ENCODE measurements at regions of chr15 and their contacts with region 1.

Region 1: GRCh38 chr15:88620995-88621772 is at the start of gene AEN:
- DNase-seq: peak; percentile 91 to 99 (median 96)
- H3K4me3 ChIP-seq: peak within 1 kb of the TSS; percentile 59 to 99 (median 91)
- H3K27ac ChIP-seq: peak within 1 kb of the TSS in 36 of 59 donors; percentile 3 to 88 (median 54)
- H3K27me3 ChIP-seq: no peaks in the 10 kb centered on the region
- CTCF ChIP-seq: peak in 55 of 56 donors; percentile 22 to 87 (median 62)
- total RNA-seq, gene AEN: 3.9 to 18.5 (median 9.6) TPM

Region 2: DNA sequence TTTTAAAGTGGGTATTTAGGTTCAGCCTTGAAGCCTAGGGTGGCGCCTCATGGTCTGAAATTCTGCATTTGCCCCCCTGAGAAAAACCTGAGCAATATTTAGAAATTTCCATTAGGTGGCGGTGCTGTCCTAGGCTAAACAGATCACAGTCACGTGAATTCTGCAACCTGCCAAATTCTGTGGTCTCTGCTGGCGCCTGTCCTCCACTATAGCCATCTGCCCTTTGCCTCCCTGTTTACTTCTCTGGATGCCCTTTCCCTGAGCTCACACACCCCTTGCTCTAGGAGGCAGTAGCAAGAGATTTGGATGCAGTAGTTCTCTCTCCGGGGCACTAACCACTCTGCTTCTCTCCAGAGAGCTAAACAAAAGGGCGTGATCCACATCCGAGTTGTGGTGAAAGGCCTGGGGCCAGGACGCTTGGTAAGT is 144.5 kb before region 1 on chr15:
- intact Hi-C with region 1: loop called in 1 of 2 experiments (anchors 5 kb)
- DNase-seq: peak in 4 of 10 donors; percentile 43 to 72 (median 50)
- H3K4me3 ChIP-seq: peak overlapping the region in 9 of 59 donors; percentile 1 to 23 (median 9)
- H3K27ac ChIP-seq: peak overlapping the region in 55 of 59 donors; percentile 35 to 87 (median 72)
- H3K27me3 ChIP-seq: no peaks in the 10 kb centered on the region
- CTCF ChIP-seq: peak; percentile 55 to 87 (median 74)

Region 3: DNA sequence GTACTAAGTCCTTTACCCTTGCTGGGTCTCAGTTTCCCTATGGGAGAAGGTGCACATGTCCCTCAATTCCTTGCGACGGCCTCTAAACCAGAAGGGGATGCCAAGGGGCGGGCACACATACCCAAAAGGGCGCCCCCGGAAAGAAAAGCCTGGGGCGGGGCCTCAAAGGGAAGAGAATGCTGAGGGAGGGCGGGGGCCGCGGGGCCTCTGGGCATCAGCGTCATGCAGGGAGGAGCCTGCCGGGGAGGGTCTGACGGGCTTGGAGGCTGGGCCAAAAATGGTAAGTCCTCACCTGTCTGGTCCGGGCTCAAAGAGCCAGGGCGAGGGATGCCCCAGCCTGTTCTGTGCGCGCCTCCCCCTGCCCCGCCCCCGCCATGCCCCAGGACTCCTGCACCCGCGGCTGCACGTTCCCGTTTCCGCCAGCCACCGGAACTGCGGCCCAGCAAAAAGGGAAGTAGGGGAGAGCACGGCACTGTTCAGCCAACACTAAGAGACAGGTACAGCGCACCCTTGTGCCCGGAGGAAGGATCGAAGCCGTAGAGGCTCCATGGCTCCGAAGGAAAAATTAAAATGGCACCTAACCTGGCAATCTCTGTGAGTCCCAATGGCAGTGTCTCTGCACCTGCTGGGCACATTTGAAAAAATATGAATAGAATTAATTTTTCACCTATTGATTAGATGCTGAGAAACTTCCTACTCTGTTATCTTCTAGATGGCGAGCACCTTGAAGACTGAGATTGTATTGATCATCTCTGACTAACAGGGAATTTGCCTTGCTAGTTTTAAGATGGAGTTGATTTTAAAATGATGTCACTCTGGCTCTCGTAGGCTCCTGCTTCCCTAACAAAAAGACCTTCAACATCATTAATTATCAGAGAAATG is 74.7 kb before region 1 on chr15 and contains the start of gene DET1:
- intact Hi-C with region 1: loop called in 1 of 2 experiments (anchors 5 kb)
- DNase-seq: peak; percentile 93 to 97 (median 96)
- H3K4me3 ChIP-seq: peak within 1 kb of the TSS; percentile 43 to 97 (median 82)
- H3K27ac ChIP-seq: peak within 1 kb of the TSS; percentile 63 to 98 (median 91)
- H3K27me3 ChIP-seq: no peaks in the 10 kb centered on the region
- CTCF ChIP-seq: peak; percentile 74 to 95 (median 89)
- total RNA-seq, gene DET1: 1.8 to 11.2 (median 7.1) TPM

Region 4: DNA sequence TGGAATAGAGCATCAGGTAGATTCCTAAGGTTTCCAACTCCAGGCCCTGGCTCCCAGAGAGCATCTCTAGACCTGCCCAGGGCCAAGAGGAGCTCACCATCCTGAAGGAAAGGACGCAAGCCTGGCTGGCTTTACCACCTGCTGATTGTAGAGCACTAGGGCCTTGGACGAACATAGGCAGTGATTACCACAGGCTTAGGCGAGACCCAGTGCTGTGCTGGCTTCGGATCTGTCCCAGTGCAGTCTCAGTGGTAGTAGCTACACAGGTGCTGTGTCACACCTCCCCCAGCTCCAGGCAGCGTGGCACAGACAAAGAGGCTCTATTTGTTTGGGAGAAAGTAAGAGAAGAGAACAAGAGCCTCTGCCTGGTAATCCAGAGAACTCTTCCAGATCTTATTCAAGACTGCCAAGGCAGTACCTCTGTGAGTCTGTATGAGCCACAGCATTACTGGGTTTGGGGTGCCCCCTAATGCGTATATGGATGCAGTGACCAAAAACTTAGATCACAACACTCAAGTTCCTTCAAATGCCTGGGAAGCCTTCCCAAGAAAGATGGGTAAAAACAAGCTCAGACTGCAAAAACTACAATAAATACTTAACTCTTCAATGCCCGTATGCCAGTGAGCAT is 43.1 kb after region 1 on chr15:
- intact Hi-C with region 1: loop called (anchors 2 to 5 kb)
- DNase-seq: peak in 4 of 10 donors; percentile 35 to 74 (median 56)
- H3K4me3 ChIP-seq: no peak overlapping the region
- H3K27ac ChIP-seq: peak overlapping the region in 1 of 59 donors; percentile 8
- H3K27me3 ChIP-seq: no peaks in the 10 kb centered on the region
- CTCF ChIP-seq: peak in 54 of 56 donors; percentile 23 to 77 (median 54)

Region 5: GRCh38 chr15:88834211-88834812 is 213.1 kb after region 1 on chr15:
- intact Hi-C with region 1: loop called (anchors 2 to 10 kb)
- DNase-seq: peak; percentile 12 to 73 (median 58)
- H3K4me3 ChIP-seq: peak overlapping the region in 1 of 59 donors; percentile 27
- H3K27ac ChIP-seq: peak overlapping the region in 3 of 59 donors; percentile 21 to 79 (median 51)
- H3K27me3 ChIP-seq: no peaks in the 10 kb centered on the region
- CTCF ChIP-seq: peak; percentile 18 to 86 (median 71)

Region 6: GRCh38 chr15:88897456-88898194 is 276.4 kb after region 1 on chr15:
- intact Hi-C with region 1: loop called in 1 of 2 experiments (anchors 10 kb)
- DNase-seq: peak in 7 of 10 donors; percentile 50 to 82 (median 74)
- H3K4me3 ChIP-seq: peak overlapping the region in 8 of 59 donors; percentile 0 to 27 (median 16)
- H3K27ac ChIP-seq: peak overlapping the region in 30 of 59 donors; percentile 9 to 80 (median 60)
- H3K27me3 ChIP-seq: peaks cover 0 to 39% (median 23%) of the 10 kb centered on the region in 45 donors
- CTCF ChIP-seq: peak in 51 of 56 donors; percentile 23 to 70 (median 55)